ENCODE measurements at regions of chr22 and their contacts with region 1.

Region 1: GRCh38 chr22:25892678-25893077 is 150.7 kb downstream of the MYO18B start:
- DNase-seq: no peak

Region 2: DNA sequence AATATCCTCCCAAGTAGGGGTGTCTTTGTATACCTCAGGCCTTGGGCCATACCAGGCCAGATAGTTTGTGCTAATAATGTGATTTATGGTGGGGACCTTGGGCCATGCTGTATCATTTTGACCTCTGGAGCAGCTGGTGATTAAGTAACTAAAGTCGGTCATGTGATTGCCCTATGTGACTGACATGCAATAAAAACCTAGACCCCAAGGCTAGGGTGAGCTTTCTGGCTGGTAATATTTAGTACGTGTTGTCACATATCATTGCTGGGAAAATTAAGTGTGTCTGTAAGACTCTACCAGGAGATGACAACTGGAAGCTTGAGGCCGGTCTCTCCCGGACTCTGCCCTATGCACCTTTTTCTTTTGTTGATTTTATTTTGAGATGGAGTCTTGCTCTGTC is 632.2 kb after region 1 on chr22:
- intact Hi-C with region 1: loop called in 1 of 2 experiments (anchors 5 kb)
- DNase-seq: no peak

Measured in posterior vena cava (tissue), 2 donors.